GM12878 (cell line): ENCODE measurements at regions of chr17 and their contacts with region 1.

Region 1: DNA sequence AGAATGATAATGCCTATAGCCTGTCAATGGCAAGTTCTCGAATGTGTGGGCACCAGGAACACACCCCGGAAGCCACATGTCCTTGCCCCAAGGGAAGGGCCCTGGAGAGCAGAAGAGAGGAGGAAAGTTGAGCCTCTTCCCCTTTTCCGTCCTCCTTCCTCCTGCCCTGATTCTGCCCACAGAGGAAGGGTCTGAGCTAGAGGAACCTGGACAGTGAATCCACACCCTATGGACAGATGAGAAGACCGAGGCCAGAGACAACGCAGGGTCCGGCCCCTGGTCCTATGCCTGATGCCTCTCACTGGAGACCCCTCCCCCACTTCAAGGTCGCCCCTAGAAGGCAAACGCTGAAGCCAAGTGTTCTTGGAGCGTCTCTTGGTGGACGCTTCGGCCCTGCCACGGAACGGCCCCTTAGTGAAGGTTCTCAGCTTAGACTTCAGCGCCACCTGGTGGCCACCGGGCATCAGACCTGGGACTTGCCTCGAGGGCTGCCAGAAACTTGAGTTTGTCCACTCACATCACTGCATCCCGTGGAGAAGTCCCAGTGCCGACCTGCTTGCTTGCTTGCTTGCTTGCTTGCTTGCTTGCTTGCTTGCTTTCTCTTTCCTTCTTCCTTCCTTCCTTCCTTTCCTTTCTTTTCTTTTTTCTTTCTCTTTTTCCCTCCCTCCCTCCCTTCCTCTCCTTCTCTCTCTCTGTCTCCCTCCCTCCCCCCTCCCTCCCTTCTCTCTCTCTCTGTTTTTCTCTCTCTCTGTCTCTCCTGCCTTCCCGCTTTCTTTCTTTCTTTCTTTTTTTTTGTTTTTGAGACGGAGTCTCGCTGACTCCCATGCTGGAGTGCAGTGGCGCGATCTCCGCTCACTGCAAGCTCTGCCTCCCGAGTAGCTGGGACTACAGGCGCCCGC is 20.6 kb upstream of the SPNS3 start:
- DNase-seq: peak; percentile 48
- ATAC-seq: peak; percentile 100
- H3K4me3 ChIP-seq: 0 out of 2 replicates have a peak overlapping the region, but pooled peaks have one; percentile 59
- H3K27ac ChIP-seq: peak overlapping the region; percentile 0; the same call in 1 of the 2 replicates
- H3K4me1 ChIP-seq: peaks cover 4% of the 10 kb centered on the region
- H3K27me3 ChIP-seq: no peaks in the 10 kb centered on the region
- CTCF ChIP-seq: peak; percentile 89 to 98 (median 97); a peak in 5 of 6 replicates
- EP300 ChIP-seq: no peak
- POLR2A ChIP-seq: no peak
- RAD21 ChIP-seq: peak; percentile 100

Region 2: DNA sequence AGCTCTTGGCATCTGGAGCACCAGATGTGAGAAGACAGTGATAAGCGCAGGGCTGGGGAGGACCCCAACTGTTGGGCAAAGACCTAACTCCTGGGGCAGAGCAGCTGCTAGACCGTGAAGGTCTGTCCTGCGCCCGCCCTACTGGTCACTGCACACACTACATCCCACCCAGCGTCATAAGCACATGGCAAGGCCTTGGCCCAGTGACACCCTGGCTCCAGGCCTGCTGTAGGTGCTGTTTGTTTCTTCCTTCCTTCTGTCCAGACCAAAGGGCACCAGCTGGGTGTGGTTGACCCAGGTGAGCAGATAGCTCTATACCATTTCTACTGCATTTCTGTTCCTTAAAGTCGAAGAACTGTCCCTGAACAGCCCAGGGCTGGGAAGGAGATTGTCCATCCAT is 862.0 kb before region 1 on chr17:
- CTCF ChIA-PET with region 1: no interaction called
- POLR2A ChIA-PET with region 1: no interaction called
- RAD21 ChIA-PET with region 1: no interaction called
- SMC1A ChIA-PET with region 1: no interaction called
- in situ Hi-C with region 1: no loop called
- intact Hi-C with region 1: no loop called
- DNase-seq: no peak
- ATAC-seq: peak; percentile 51
- H3K4me3 ChIP-seq: no peak overlapping the region
- H3K27ac ChIP-seq: no peak overlapping the region
- H3K4me1 ChIP-seq: no peaks in the 10 kb centered on the region; the same call in 1 of the 2 replicates
- H3K27me3 ChIP-seq: no peaks in the 10 kb centered on the region
- CTCF ChIP-seq: 0 out of 6 replicates have a peak, but pooled peaks of 1 of the 3 experiments have one; percentile 7
- EP300 ChIP-seq: no peak
- POLR2A ChIP-seq: no peak
- RAD21 ChIP-seq: no peak

Region 3: DNA sequence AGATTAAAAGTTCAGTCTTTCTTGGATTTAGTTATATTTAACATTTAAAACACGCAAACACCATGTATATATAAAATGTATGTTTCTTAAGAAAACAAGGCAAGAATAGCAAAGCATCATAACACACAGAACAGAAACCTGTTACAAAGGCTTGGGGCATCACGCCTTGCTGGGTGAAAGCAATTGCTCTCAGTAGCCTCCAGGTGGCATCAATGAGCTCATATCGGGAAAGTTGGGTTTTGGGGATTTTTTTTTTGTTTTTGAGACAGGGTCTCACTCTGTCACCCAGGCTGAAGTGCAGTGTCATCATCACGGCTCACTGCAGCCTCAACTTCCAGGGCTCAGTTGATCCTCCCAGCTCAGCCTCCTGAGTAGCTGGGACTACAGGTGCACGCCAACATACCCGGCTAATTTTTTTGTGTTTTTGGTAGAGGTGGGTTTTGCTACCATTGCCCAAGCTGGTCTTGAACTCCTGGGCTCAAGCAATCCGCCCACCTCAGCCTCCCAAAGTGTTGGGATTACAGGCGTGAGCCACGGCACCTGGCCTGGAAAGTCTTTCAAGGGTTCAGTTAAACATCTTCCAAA is 213.3 kb before region 1 on chr17:
- CTCF ChIA-PET with region 1: interaction called, 20 read pairs
- POLR2A ChIA-PET with region 1: interaction called, 4 read pairs
- RAD21 ChIA-PET with region 1: interaction called, 28 read pairs
- SMC1A ChIA-PET with region 1: interaction called, 17 read pairs
- in situ Hi-C with region 1: loop called (anchors 5 kb)
- intact Hi-C with region 1: loop called (anchors 1 kb)
- DNase-seq: no peak
- ATAC-seq: peak; percentile 81
- H3K4me3 ChIP-seq: no peak overlapping the region
- H3K27ac ChIP-seq: no peak overlapping the region
- H3K4me1 ChIP-seq: no peaks in the 10 kb centered on the region
- H3K27me3 ChIP-seq: no peaks in the 10 kb centered on the region
- CTCF ChIP-seq: peak; percentile 64 to 79 (median 72)
- EP300 ChIP-seq: no peak
- POLR2A ChIP-seq: no peak
- RAD21 ChIP-seq: peak; percentile 61

Region 4: DNA sequence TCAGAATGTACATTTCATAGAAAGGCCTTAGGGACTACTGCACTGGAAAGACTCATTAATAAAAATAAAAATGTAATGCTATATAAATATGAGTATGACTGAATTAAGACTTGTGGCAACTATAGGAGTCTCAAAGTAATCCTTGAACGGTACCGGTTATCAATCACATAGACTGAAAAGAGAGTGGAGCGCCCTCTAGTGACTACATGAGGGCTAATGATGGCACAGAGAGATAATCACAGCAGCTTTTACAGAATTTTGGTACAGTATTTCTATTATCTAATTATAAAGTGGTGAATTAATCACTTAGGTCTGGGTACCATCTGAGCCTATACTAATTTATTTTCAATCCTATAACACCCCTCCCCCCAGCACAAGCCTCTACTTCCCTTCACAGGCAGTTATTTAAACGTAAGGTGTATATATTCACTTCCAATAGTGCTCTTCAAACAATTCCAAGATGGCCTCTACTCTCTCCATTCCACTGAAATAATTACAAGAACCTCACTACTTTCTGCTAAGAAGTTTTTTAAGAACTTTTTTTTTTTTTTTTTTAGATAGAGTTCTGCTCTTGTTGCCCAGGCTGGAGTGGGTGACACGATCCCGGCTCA is 108.7 kb before region 1 on chr17:
- CTCF ChIA-PET with region 1: interaction called, 6 read pairs
- POLR2A ChIA-PET with region 1: no interaction called
- RAD21 ChIA-PET with region 1: no interaction called
- SMC1A ChIA-PET with region 1: interaction called, 4 read pairs
- in situ Hi-C with region 1: no loop called
- intact Hi-C with region 1: loop called (anchors 2 kb)
- DNase-seq: no peak
- ATAC-seq: peak; percentile 96
- H3K4me3 ChIP-seq: no peak overlapping the region
- H3K27ac ChIP-seq: no peak overlapping the region
- H3K4me1 ChIP-seq: peaks cover 3% of the 10 kb centered on the region; the same call in 1 of the 2 replicates
- H3K27me3 ChIP-seq: no peaks in the 10 kb centered on the region
- CTCF ChIP-seq: peak; percentile 60 to 72 (median 62)
- EP300 ChIP-seq: no peak
- POLR2A ChIP-seq: no peak
- RAD21 ChIP-seq: peak; percentile 51

Region 5: DNA sequence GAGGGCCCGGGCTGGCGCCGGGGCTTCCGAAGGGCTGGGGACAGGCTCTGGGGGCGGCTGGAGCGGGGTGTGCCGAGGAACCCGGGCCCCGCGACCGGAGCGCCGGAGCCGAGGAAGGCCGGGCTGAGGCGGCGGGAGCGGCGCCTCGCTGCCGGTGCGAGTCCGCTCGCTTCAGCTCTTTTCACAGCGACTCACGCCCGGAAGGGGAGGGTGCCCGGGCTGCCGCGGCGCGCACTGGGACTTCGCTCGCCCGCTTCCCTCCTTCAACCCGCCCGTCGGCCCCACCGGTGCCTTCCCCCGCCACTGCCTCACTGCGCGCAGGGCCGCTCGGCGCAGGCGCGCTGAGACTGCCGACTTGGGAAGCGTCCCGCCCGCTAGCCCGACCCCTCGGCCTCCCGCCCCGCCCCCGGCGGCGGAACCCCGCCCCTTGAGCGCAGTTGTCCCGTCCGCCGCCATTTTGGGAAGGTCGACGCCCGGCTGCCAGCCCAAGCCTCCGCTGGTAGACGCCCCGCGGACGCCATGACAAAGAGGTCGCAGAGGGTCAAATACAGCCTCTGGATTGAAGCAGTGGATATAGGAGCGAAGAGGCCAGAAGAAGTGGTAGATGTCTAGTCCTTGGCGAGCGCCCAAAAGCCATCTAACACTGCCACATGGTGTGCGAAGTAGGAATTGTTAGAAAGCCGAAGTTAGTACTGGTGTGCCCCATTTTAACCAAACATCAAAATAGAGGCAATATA is 46.7 kb before region 1 on chr17 and contains the start of gene UBE2G1:
- CTCF ChIA-PET with region 1: interaction called, 3 read pairs
- POLR2A ChIA-PET with region 1: no interaction called
- RAD21 ChIA-PET with region 1: interaction called, 3 read pairs
- SMC1A ChIA-PET with region 1: interaction called, 4 read pairs
- in situ Hi-C with region 1: no loop called
- intact Hi-C with region 1: loop called (anchors 2 kb)
- DNase-seq: peak; percentile 89
- ATAC-seq: peak; percentile 89
- H3K4me3 ChIP-seq: peak within 1 kb of the TSS; percentile 66
- H3K27ac ChIP-seq: peak within 1 kb of the TSS; percentile 88
- H3K4me1 ChIP-seq: peaks cover 10% of the 10 kb centered on the region
- H3K27me3 ChIP-seq: no peaks in the 10 kb centered on the region
- CTCF ChIP-seq: peak; percentile 26 to 50 (median 34); a peak in 4 of 6 replicates
- EP300 ChIP-seq: no peak
- POLR2A ChIP-seq: peak; percentile 91
- RAD21 ChIP-seq: peak; percentile 61
- polyA plus RNA-seq, gene UBE2G1: 24.4 to 35.2 TPM

Region 6: GRCh38 chr17:4375039-4375748 is 38.0 kb before region 1 on chr17:
- CTCF ChIA-PET with region 1: no interaction called
- POLR2A ChIA-PET with region 1: no interaction called
- RAD21 ChIA-PET with region 1: interaction called, 6 read pairs
- SMC1A ChIA-PET with region 1: interaction called, 8 read pairs
- in situ Hi-C with region 1: no loop called
- intact Hi-C with region 1: loop called (anchors 5 kb)
- DNase-seq: peak; percentile 98
- ATAC-seq: peak; percentile 82
- H3K4me3 ChIP-seq: peak overlapping the region; percentile 8; the same call in 1 of the 2 replicates
- H3K27ac ChIP-seq: peak overlapping the region; percentile 85
- H3K4me1 ChIP-seq: peaks cover 45% of the 10 kb centered on the region
- H3K27me3 ChIP-seq: no peaks in the 10 kb centered on the region
- CTCF ChIP-seq: no peak
- EP300 ChIP-seq: peak; percentile 93 to 96
- POLR2A ChIP-seq: peak; percentile 42; the same call in 1 of the 2 replicates
- RAD21 ChIP-seq: no peak

Region 7: GRCh38 chr17:4453812-4454591 is 40.8 kb after region 1 on chr17:
- CTCF ChIA-PET with region 1: no interaction called
- POLR2A ChIA-PET with region 1: no interaction called
- RAD21 ChIA-PET with region 1: no interaction called
- SMC1A ChIA-PET with region 1: no interaction called
- in situ Hi-C with region 1: no loop called
- intact Hi-C with region 1: no loop called
- DNase-seq: no peak
- ATAC-seq: no peak
- H3K4me3 ChIP-seq: no peak overlapping the region
- H3K27ac ChIP-seq: no peak overlapping the region
- H3K4me1 ChIP-seq: no peaks in the 10 kb centered on the region
- H3K27me3 ChIP-seq: peaks cover 0 to 2% of the 10 kb centered on the region in 2 experiments; a peak in 1 of 4 replicates
- CTCF ChIP-seq: no peak
- EP300 ChIP-seq: no peak
- POLR2A ChIP-seq: no peak
- RAD21 ChIP-seq: no peak

Region 8: DNA sequence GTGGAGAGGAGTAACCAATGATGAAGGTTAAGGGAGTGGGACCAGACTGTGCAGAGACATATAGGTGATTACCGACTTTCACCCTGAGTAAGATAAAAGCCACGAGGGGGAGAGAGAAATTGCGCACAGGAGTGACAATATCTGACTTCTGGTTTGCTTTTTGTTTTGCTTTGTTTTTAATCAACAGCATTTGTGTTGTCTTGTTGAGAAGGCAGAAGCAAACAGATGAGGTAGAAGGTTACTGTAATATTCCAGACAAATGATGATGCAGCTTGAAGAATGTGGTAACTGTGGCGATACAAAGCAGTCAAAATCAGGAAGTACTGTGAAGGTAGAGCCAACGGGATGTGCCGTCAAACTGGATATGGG is 283.2 kb after region 1 on chr17:
- CTCF ChIA-PET with region 1: no interaction called
- POLR2A ChIA-PET with region 1: no interaction called
- RAD21 ChIA-PET with region 1: no interaction called
- SMC1A ChIA-PET with region 1: no interaction called
- in situ Hi-C with region 1: no loop called
- intact Hi-C with region 1: no loop called
- DNase-seq: peak; percentile 55
- ATAC-seq: peak; percentile 96
- H3K4me3 ChIP-seq: peak overlapping the region; percentile 30
- H3K27ac ChIP-seq: peak overlapping the region; percentile 50
- H3K4me1 ChIP-seq: peaks cover 19% of the 10 kb centered on the region
- H3K27me3 ChIP-seq: no peaks in the 10 kb centered on the region
- CTCF ChIP-seq: no peak
- EP300 ChIP-seq: no peak
- POLR2A ChIP-seq: no peak
- RAD21 ChIP-seq: no peak